ENCODE measurements at regions of chr5 and their contacts with region 1.

Region 1: GRCh38 chr5:1199649-1200494 is 1.5 kb upstream of the SLC6A19 start:
- DNase-seq: no peak
- H3K4me3 ChIP-seq: no peak overlapping the region
- CTCF ChIP-seq: no peak
- POLR2A ChIP-seq: no peak

Region 2: GRCh38 chr5:1503241-1504068 is 303.6 kb after region 1 on chr5:
- intact Hi-C with region 1: loop called (anchors 10 kb)
- DNase-seq: peak; percentile 50 to 91
- H3K4me3 ChIP-seq: no peak overlapping the region
- CTCF ChIP-seq: no peak
- POLR2A ChIP-seq: no peak

Region 3: GRCh38 chr5:2105141-2105540 is 905.3 kb after region 1 on chr5:
- intact Hi-C with region 1: no loop called
- DNase-seq: peak in 1 of 2 donors; percentile 79
- H3K4me3 ChIP-seq: no peak overlapping the region
- CTCF ChIP-seq: no peak
- POLR2A ChIP-seq: no peak

Measured in lower leg skin (tissue), 4 donors.